Psoas muscle (tissue), 8 donors: ENCODE measurements at regions of chr5 and their contacts with region 1.

Region 1: DNA sequence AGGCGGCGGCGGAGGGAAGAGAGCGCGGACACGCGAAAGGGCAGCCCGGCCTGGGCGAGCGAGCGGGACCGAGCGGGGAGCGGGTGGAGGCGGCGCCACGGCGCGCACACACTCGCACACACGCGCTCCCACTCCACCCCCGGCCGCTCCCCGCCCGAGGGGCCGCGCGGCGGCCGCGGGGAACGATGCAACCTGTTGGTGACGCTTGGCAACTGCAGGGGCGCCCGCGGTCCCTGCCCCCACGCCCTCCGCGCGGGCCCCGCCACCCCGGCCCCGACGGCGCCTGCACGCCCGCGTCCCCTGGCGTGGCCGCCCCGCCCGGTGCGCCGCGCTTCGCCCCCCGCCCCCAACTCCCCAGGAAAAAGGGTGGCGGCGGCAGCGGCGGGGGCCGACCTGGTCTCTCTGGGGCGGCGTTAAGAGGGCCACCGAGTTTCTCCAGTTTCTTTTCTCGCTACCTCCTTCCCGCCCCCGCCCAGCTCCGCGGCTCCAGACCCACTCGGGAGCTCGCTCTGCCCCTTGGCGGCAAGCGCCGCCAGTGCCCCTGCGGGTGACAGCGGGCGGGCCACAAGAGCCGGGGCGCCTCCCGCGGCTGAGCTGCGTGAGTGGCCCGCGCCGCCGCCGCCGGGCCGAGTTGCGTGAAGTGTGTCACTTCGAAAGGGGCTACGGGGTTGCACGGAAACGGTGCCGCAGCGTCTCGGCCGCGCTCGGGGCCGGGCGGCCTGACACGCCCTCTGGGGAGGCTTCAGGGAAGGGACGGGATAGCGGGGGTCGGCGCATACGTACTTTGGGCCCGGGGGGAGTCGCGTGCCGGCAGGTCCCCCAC is at the start of gene NR3C1:
- DNase-seq: peak; percentile 89 to 95
- ATAC-seq: peak; percentile 71 to 77 (median 75)
- H3K4me3 ChIP-seq: peak within 1 kb of the TSS; percentile 93
- H3K27ac ChIP-seq: peak within 1 kb of the TSS; percentile 99
- H3K4me1 ChIP-seq: peaks cover 5% of the 10 kb centered on the region
- H3K27me3 ChIP-seq: no peaks in the 10 kb centered on the region
- CTCF ChIP-seq: peak; percentile 74
- total RNA-seq, gene NR3C1: 55.8 to 89.7 (median 63.6) TPM

Region 2: DNA sequence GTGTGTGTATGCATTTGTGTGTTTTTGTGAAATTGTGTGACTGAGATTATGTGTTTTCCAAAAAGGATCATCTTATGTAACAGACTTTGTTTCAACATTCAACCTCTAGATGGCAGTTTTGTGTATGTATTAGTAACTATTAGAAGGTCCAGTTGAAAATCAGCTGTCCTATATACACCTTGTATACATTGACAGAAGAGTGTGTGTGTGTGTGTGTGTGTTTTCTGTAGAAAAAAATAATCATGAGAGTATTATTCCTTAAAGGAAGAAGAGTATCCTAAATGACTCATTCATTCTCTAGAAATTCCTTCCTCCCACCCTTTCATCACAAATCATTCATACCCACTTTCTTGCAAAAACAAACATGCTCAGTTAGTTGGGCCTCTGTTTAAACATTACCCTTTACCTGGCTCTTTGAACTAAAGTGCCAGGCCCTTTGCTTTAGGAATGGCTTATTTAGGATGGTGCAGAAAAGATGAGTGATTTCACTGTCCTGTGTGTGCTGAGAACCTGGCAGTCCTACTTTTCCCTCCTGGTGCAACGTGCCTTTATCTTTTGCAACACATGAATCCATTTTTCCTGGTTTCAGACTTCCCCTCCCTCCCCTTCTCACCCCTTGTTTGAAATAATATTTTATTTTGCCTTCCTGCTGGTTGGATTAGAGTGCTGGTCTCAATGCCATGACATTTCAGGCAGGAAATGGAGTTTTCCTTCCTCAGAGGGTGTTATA is 481.4 kb before region 1 on chr5:
- intact Hi-C with region 1: loop called (anchors 5 to 10 kb)
- DNase-seq: no peak
- ATAC-seq: peak; percentile 65 to 80 (median 71)
- H3K4me3 ChIP-seq: no peak overlapping the region
- H3K27ac ChIP-seq: no peak overlapping the region
- H3K4me1 ChIP-seq: peaks cover 23% of the 10 kb centered on the region
- H3K27me3 ChIP-seq: no peaks in the 10 kb centered on the region
- CTCF ChIP-seq: peak; percentile 65

Region 3: DNA sequence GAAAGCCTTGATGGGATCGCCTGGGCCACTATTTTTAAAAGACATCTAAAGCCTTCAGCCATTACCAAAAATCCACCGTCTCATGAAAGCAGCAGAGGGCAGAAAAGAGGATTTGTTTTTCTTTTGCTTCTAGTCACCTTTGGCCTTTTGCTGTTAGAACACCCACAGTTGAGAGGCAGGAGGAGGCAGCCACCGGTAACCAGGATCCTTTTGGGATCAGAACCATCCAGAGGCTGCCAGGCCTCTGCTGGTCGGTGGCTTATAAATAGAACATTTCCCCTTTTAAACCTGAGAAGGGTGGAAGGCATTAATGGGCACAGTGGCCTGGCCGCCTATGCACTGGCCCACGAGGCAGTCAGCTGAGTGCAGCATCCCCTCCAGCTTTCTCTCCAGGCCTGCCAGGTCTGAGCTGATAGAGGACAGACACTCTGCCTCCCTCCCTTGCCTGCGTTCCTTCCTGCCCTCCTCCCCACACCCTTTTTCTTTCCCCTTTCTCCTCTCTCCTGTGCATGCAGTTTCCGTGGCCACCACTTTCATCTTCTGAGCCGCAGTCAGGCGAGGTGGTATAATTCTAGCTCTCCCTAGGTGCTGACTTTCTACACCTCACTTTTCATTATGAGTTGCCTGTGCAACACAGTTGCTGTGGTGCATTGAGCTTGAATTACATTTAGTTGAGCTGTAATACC is 380.2 kb before region 1 on chr5:
- intact Hi-C with region 1: loop called (anchors 2 to 10 kb)
- DNase-seq: peak; percentile 67 to 92
- ATAC-seq: peak; percentile 94 to 98 (median 96)
- H3K4me3 ChIP-seq: peak overlapping the region; percentile 7
- H3K27ac ChIP-seq: peak overlapping the region; percentile 86
- H3K4me1 ChIP-seq: peaks cover 51% of the 10 kb centered on the region
- H3K27me3 ChIP-seq: no peaks in the 10 kb centered on the region
- CTCF ChIP-seq: no peak

Region 4: GRCh38 chr5:143134900-143135299 is 268.9 kb before region 1 on chr5:
- intact Hi-C with region 1: loop called (anchors 5 kb)
- DNase-seq: no peak
- ATAC-seq: peak; percentile 3 to 49 (median 42)
- H3K4me3 ChIP-seq: peak overlapping the region; percentile 54
- H3K27ac ChIP-seq: peak overlapping the region; percentile 94
- H3K4me1 ChIP-seq: peaks cover 71% of the 10 kb centered on the region
- H3K27me3 ChIP-seq: no peaks in the 10 kb centered on the region
- CTCF ChIP-seq: no peak

Region 5: DNA sequence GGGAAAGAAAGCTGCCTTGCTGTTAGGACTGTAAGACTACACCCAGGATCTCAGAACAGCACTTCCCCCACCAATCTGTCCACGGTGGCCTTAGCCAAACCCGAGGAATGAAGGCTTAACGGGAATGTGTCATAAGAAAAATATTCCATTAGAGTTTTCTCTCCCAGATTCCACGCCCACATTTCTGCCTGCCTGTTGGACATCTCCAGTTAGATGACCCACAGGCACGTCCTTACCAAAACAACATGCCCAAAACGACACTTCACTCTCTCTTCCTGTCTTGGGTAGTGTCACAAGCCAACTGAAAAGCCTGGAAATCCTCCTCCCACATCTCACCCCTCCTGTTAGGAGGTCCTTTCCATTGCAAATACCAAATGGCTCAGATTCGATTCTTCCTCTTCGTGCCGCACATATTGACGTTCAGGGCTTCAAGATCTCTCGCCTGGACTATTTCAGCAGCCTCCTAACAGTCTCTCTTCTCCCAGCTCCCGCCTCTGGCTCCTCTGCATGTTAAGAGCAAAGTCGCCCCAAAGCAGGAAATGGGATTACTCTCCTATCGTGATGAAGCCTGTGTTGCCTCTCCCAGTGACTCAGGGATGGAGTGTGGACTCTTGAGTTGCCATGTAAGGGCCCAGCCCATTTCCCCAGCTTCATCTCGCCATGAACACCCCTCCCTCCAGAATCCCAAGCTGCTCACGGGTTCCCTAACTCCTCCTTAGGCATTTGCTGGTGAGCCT is 159.6 kb before region 1 on chr5:
- intact Hi-C with region 1: loop called (anchors 5 to 10 kb)
- DNase-seq: peak; percentile 75 to 85
- ATAC-seq: peak; percentile 83 to 85 (median 84)
- H3K4me3 ChIP-seq: peak overlapping the region; percentile 37
- H3K27ac ChIP-seq: peak overlapping the region; percentile 87
- H3K4me1 ChIP-seq: peaks cover 52% of the 10 kb centered on the region
- H3K27me3 ChIP-seq: no peaks in the 10 kb centered on the region
- CTCF ChIP-seq: no peak

Region 6: DNA sequence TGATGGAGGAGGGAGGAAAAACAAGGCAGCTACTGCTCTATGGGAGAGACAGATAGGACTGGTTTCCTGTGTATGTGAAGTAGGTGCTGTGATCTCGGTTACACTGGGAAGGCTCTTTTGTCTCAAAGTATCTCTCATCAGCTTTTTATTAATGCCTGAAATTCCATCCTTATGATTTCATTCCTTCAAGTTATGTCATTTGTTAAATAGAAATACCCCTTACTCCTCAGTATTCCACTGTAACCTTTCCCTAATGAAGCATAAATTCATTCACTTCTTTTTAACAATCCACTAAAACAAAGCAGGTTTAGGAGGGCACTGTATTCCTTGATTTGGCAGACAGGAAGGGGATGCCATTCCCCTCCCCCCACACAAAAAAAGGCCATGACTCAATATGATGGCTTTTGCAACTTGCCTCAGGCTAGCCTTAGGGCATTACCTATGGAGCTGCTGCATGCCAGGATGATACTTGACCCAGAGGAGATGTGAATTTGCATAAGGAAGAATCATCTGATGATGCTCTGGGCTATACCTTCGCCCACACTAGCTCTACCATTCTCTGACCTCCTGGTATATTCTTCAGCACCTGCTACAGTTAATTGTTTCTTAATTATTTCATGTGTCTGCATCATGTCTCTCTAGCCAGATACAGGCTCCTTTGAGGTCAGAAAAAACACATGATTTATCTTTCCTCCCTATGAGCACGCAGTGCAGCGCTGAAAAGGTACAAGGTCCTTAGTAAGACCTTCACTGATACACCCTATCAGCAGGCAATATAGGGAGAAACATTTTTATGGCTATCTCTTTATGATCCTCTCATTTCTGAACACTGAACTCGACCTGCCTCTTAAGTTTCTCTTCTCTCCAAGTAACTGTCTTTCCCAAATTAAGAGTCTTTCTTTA is 26.6 kb before region 1 on chr5:
- intact Hi-C with region 1: no loop called
- DNase-seq: no peak
- ATAC-seq: peak; percentile 72 to 83 (median 78)
- H3K4me3 ChIP-seq: no peak overlapping the region
- H3K27ac ChIP-seq: peak overlapping the region; percentile 65
- H3K4me1 ChIP-seq: peaks cover 78% of the 10 kb centered on the region
- H3K27me3 ChIP-seq: no peaks in the 10 kb centered on the region
- CTCF ChIP-seq: no peak

Region 7: DNA sequence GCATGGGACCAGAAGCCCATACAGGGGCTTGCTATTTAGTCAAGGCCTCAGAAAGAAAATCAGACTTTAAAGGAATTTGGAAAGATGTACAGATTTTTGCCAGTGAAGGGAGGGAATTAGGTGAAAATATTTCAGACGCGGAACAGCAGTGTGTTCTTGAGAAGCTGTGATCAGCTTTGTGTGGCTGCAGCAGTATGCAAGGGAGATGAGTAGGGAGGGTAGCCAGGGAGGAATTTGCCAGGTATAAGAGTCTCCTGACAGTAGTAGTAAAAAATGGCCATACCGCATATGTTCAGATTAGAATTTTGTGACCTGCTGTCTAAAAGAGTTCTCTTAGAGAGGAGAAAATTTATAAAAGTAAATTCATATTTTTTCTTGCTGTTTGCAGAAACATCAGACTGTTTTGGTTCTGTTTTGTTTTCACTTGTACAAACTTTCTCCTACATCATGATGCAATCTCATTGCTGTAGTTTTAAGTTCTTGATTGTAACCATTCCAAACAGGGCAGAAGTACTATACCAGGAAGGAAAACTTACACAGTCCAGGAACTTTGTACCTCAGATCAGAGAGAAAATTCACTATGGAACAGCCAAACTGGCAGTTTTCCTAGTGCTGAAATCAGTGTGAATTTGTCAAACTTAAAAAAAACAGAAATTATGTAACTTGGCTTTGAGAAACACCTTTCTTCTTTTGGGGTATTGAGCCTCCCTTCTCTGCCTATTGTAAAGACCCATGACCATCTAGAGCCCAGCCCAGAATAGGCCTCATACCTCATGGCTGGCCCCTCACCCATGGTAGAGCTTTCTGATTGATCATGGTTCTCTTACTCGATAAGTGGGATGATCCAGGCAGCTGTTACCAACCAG is 78.1 kb after region 1 on chr5:
- intact Hi-C with region 1: no loop called
- DNase-seq: no peak
- ATAC-seq: no peak
- H3K4me3 ChIP-seq: no peak overlapping the region
- H3K27ac ChIP-seq: no peak overlapping the region
- H3K4me1 ChIP-seq: no peaks in the 10 kb centered on the region
- H3K27me3 ChIP-seq: no peaks in the 10 kb centered on the region
- CTCF ChIP-seq: no peak

Region 8: GRCh38 chr5:143506881-143507551 is 103.2 kb after region 1 on chr5:
- intact Hi-C with region 1: loop called in 1 of 2 experiments (anchors 5 kb)
- DNase-seq: no peak
- ATAC-seq: peak; percentile 88 to 95 (median 90)
- H3K4me3 ChIP-seq: no peak overlapping the region
- H3K27ac ChIP-seq: peak overlapping the region; percentile 77
- H3K4me1 ChIP-seq: peaks cover 35% of the 10 kb centered on the region
- H3K27me3 ChIP-seq: no peaks in the 10 kb centered on the region
- CTCF ChIP-seq: no peak

Region 9: DNA sequence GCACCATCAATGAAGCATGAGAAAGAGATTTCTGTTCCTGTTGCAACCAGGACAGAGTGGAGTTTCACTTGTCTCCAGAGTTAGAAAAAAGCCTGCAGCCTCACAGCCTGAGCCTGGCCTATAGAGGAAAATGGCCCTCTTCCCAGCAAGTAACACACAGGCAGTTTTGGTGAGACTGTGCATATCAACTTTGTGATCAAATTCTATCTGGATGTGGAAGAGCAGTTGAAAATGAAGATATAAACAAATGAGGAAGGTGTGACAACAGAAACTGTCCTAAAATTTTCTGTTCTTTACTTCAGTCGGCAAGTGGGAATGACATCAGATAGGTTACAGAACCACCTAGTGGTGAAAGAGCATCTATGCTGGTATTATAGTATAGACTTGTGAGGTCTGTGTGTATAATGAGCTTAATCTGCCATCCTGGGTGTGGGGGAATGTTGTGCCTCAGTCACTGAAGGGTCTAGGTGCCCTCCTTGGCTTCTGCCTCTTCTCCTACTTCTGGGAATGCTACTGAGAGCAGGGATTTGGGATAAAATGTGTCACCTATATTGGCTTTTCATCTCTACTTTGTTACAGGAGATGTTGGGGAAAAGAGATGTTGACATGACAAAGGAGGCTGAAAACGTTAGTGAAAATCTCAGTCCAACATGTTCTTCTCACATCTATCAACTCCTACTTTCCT is 738.5 kb after region 1 on chr5:
- intact Hi-C with region 1: loop called in 1 of 2 experiments (anchors 10 kb)
- DNase-seq: no peak
- ATAC-seq: peak; percentile 53 to 81 (median 65)
- H3K4me3 ChIP-seq: no peak overlapping the region
- H3K27ac ChIP-seq: no peak overlapping the region
- H3K4me1 ChIP-seq: peaks cover 32% of the 10 kb centered on the region
- H3K27me3 ChIP-seq: no peaks in the 10 kb centered on the region
- CTCF ChIP-seq: peak; percentile 60